Posterior cingulate gyrus (tissue), 11 donors: ENCODE measurements at regions of chr2 and their contacts with region 1.

Region 1: GRCh38 chr2:152036611-152037469 is 62.0 kb downstream of the CACNB4 start:
- DNase-seq: peak; percentile 29 to 94 (median 74)

Region 2: DNA sequence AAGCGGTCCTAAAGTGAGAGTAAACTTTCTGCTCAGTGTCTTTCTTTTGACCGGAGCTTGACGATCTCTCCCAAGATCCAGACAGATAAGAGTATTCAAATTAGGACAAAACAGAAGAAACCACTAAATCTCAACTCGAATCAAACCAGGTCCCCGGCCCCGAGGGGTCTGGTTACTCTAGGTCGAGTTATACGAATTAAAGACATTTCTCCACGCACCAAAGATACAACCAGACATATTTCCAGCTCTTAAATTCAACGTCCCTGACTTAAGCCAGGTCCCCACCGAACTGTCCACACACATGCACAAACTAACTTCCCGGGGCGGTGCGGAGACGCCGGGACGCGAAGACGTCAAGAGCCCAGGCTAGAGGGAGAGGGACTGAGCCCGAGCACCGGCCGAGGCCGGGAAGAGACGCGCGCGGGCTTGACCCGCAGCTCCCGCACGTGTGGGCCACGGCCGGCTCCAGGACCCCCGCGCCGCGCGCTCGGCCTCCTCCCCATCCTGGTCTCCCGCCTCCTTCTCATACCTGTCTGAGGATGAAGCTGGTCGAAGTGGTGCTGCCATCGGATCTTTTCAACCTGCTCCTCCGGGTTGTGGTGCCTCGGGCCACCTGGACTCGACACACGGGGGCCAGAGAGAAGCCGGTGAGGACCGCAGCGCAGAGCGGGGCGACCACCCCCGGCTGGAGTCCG is 61.1 kb after region 1 on chr2:
- intact Hi-C with region 1: loop called (anchors 10 kb)
- DNase-seq: peak in 6 of 10 donors; percentile 26 to 91 (median 54)

Region 3: GRCh38 chr2:152635635-152636298 is 598.9 kb after region 1 on chr2:
- intact Hi-C with region 1: loop called (anchors 10 kb)
- DNase-seq: peak in 7 of 10 donors; percentile 31 to 83 (median 70)

Region 4: DNA sequence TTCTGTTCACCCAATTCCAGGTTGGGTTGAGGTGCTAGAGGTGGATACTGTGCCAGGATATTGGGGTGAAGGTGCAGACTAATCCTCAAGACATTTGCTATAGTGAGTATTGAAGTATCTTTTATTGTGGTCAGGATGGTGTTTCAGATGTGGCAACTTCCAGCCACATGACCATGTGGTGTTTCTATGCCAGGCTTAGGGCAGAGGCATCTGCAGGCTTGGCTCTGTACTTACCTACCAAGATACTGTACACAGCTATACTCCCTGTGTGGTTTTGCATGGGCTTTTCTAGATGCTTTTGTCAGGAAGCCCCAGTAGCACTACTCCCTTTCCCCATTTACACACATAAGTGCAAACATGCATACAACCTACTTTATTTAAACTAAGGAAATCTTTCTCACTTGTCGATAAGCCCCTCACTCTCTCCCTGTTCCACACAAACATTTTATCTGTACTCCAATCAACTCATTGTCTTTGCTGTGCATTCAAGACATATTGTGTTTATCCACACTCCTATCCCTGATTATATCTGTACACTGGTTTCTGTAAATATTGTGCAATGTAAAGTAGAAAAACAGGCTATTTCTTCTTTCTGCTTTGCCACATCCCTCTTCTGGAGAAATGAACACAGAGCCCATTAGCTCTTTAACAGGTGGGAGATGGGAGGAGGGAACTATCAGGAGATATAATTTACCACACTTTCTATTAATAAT is 693.9 kb after region 1 on chr2:
- intact Hi-C with region 1: loop called (anchors 10 kb)
- DNase-seq: no peak

Region 5: DNA sequence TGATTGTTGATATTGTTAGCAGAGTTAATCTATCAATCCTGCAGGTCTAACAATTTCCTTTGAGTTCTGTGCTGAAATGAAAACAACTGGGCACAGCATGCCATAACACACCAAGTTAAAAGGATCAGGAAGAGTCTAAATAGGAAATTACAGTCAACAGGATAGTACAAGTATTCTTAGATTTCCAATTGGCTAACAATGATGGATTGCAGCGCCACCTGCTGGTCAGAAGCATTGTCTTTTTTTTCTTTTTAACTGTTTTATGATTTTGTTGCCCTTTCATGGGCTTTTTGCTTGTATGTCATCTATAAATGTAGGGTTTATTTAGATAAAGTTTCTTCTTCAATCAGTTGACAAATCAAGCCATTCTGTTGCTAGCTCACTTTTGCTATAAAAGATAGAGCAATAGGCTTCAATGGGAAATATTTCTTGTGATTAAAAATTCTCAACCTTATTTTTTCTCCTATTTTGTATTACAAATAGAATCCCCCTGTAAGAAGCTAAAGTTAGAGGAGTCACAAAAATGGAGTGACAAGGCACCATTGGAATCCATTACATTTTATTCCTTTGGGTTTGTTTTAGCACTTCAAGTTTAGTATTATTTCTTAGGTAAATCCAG is 1482.5 kb after region 1 on chr2:
- intact Hi-C with region 1: loop called (anchors 2 kb)
- DNase-seq: peak in 7 of 10 donors; percentile 20 to 88 (median 66)